ENCODE measurements at regions of chr20 and their contacts with region 1.

Region 1: GRCh38 chr20:23375827-23376226 is 13.8 kb downstream of the GZF1 start:
- DNase-seq: no peak
- ATAC-seq: no peak
- H3K4me3 ChIP-seq: no peak overlapping the region
- H3K27ac ChIP-seq: no peak overlapping the region
- H3K4me1 ChIP-seq: peaks cover 0 to 2% of the 10 kb centered on the region in 2 donors
- H3K27me3 ChIP-seq: no peaks in the 10 kb centered on the region

Region 2: DNA sequence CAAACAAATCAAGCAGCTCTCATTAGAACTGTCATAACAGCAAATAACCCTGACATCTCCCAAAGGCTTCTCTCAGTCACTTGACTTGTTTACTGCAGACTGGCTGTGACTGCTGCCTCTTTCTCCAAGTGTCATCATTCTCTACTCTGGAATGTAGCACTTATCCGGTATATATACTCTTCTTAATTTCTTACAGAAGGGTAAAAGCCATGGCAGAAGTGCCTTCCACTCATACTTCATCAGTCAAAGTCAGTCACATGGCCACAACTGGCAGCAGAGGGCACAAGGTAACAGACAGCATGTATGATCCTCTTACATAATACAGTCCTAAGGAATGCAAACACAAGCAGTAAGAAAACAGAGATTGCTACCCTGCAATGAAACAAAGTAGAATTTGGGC is 36.2 kb after region 1 on chr20:
- intact Hi-C with region 1: loop called in 1 of 2 experiments (anchors 5 kb)
- DNase-seq: no peak
- ATAC-seq: no peak
- H3K4me3 ChIP-seq: no peak overlapping the region
- H3K27ac ChIP-seq: no peak overlapping the region
- H3K4me1 ChIP-seq: no peaks in the 10 kb centered on the region
- H3K27me3 ChIP-seq: no peaks in the 10 kb centered on the region